ENCODE measurements at regions of chr2 and their contacts with region 1.

Region 1: DNA sequence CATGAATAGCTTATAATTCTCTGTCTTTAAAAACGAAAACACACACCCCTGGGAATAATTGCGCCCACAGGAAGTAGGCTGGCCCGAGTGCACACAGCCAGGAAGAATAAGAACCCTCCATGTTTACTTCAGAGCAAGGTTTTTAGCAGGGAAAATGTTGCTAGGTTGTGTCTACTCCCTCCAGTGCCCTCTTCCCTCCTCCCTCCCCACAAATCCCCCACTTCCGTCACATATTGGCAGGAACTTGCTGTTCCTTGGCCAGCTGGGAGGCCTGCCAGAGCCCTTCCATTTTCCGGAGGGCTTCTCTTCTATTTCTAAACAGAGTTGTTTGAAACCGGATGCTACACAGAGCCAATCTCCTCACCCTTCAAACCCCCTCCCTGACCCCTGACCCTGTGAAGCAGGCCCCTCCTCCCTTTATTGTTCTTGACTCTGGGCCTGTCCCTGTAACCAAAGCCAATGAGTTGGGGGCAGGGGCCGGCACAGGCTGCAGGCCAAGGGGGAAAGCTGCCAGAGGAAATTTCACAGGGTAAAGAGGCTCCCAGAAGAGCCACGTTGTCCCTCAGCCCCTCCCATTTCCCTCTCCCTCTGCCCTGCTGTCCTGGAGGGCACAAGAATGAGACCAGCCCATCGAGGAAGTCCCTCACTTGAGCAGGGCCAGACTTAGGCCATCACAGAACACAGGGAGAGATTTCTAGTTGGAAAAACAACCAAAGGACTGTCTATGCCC is 49.8 kb upstream of the LGALSL start:
- DNase-seq: peak; percentile 87 to 93
- ATAC-seq: peak; percentile 90 to 96 (median 94)
- H3K4me3 ChIP-seq: peak overlapping the region in 4 of 10 donors; percentile 1 to 27 (median 6)
- H3K27ac ChIP-seq: peak overlapping the region; percentile 56 to 92 (median 86)
- H3K4me1 ChIP-seq: peaks cover 14 to 52% (median 45%) of the 10 kb centered on the region in 9 donors
- H3K27me3 ChIP-seq: no peaks in the 10 kb centered on the region
- CTCF ChIP-seq: no peak

Region 2: DNA sequence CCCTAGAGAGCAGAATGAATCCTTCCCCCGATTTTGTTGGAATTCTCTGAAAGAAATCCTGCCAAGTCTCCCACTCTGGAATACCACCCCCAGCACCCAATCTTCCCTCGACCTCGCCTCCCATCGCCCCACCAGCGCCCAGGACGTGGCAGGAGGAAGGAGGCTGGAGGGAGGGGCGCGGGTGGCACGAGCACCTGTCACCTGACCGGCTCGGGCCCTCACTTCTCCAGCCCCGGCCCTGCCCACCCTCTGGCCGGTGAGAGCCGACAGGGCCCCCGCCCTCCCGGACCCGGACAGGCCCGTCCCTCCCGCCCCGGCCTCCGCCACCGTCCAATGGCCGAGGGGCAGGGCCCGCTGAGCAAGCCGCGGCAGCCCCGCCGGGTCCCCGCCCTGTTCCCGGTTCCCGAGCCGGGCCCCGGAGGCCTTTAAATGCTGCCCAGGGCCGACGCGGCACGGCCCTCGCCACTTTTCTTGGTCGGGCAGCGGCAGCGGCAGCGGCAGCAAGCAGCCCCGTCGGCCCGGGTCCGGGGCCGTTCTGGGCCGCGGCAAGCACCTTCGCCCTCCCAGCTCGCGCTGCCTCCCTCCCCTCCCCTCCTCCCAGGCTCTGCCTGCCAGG is 49.7 kb after region 1 on chr2 and contains the start of gene LGALSL:
- intact Hi-C with region 1: loop called in 6 of 10 experiments (anchors 2 to 10 kb)
- DNase-seq: peak; percentile 72 to 79
- ATAC-seq: peak; percentile 85 to 93 (median 90)
- H3K4me3 ChIP-seq: peak within 1 kb of the TSS; percentile 73 to 89 (median 81)
- H3K27ac ChIP-seq: peak within 1 kb of the TSS; percentile 89 to 98 (median 94)
- H3K4me1 ChIP-seq: peaks cover 0 to 41% (median 27%) of the 10 kb centered on the region in 9 donors
- H3K27me3 ChIP-seq: peaks cover 0 to 10% (median 0%) of the 10 kb centered on the region in 7 donors
- CTCF ChIP-seq: no peak
- total RNA-seq, gene LGALSL: 5.3 to 24.8 (median 12.3) TPM